ENCODE measurements at regions of chr21 and their contacts with region 1.

Region 1: DNA sequence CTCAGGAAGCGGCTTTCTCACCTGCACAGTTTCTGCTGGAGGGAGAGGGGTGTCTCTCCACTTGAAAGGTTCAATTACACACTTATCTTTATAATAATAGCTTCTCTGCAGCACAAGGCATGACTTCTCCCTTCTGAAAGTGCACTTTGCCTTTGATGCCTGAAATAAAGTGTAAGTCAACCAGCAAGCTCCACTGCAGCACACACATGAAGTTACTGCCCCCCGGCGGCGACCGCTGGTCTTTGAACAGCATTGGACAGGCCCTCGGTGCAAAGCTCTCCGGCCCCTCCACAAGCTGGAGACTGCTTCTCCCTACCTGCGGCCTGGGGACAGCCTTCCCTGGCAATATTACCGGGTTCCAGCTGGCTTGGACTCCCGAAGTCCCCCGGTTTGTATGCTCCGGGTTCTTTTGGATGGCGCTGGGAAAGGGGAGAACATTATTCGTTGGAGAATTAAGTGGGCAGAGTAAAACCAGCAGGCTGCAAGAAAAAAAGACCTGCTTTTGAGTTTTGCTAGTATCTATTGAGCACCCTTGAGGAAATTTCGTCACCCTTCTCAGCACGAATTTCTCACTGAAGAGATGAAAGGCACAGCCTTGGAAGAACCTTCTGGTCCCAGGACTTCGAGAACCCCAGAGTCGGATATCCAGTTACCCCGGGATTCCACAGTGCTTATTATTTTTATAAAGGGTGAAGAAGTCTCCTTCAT is 11.8 kb downstream of the RCAN1 start:
- DNase-seq: peak; percentile 59
- ATAC-seq: peak; percentile 100
- H3K4me3 ChIP-seq: no peak overlapping the region
- H3K27ac ChIP-seq: no peak overlapping the region
- H3K4me1 ChIP-seq: peaks cover 5% of the 10 kb centered on the region; the same call in 1 of the 2 replicates
- H3K27me3 ChIP-seq: no peaks in the 10 kb centered on the region
- CTCF ChIP-seq: peak; percentile 93
- EP300 ChIP-seq: no peak
- POLR2A ChIP-seq: no peak
- RAD21 ChIP-seq: peak; percentile 80

Region 2: GRCh38 chr21:34526618-34527290 is 76.4 kb before region 1 on chr21:
- CTCF ChIA-PET with region 1: no interaction called
- POLR2A ChIA-PET with region 1: interaction called, 4 read pairs
- in situ Hi-C with region 1: no loop called
- intact Hi-C with region 1: loop called (anchors 5 kb)
- DNase-seq: peak; percentile 96
- ATAC-seq: peak; percentile 69
- H3K4me3 ChIP-seq: peak overlapping the region; percentile 60 to 70 (median 65)
- H3K27ac ChIP-seq: peak overlapping the region; percentile 87
- H3K4me1 ChIP-seq: peaks cover 62% of the 10 kb centered on the region
- H3K27me3 ChIP-seq: no peaks in the 10 kb centered on the region
- CTCF ChIP-seq: no peak
- EP300 ChIP-seq: peak; percentile 27 to 79; a peak in 3 of 4 replicates
- POLR2A ChIP-seq: peak; percentile 56 to 97; a peak in 3 of 4 replicates
- RAD21 ChIP-seq: no peak